ENCODE measurements at regions of chr12 and their contacts with region 1.

Region 1: GRCh38 chr12:55817346-55818139 is at the starts of genes ORMDL2 and SARNP:
- DNase-seq: peak; percentile 99
- H3K4me3 ChIP-seq: peak within 1 kb of the TSS; percentile 66 to 87
- H3K27ac ChIP-seq: peak within 1 kb of the TSS; percentile 86 to 89
- H3K4me1 ChIP-seq: peaks cover 0 to 17% of the 10 kb centered on the region in 2 donors
- H3K27me3 ChIP-seq: no peaks in the 10 kb centered on the region
- CTCF ChIP-seq: no peak
- total RNA-seq, gene ORMDL2: 13.8 TPM
- total RNA-seq, gene SARNP: 13.4 TPM

Region 2: GRCh38 chr12:55659486-55660385 is 157.8 kb before region 1 on chr12:
- intact Hi-C with region 1: loop called (anchors 10 kb)
- DNase-seq: no peak
- H3K4me3 ChIP-seq: no peak overlapping the region
- H3K27ac ChIP-seq: no peak overlapping the region
- H3K4me1 ChIP-seq: no peaks in the 10 kb centered on the region
- H3K27me3 ChIP-seq: no peaks in the 10 kb centered on the region
- CTCF ChIP-seq: peak in 2 of 3 experiments; percentile 53 to 63

Region 3: DNA sequence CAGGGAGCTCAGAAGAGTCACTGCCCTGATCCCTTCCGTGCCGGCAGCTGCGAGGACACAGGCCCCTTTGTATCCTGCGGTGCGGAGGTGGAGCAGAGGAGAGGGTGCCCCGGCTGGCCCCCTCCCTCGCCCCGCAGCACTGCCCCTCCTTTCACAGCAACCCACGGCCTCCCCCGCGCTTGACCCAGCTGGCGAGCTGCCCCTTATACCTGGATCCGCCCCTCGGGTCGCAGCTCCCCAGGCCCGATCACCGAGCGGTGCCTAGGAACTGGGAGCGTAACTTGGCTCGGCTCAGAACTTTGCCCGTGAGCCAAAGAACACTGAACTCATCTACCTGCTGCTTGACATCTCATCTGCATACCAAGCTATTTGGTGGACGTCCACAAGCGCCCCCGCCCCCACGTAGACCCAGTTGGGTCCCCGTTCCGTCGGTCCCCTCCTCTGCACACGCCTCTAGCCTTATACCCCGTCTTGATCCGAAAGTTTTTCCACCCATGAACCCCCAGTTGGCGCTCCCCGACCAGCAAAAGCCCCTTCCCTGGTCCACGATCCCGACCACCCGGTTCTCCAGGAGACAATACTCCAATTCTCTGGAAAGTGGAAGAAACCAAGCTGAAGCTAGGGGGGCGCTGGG is 12.5 kb after region 1 on chr12:
- intact Hi-C with region 1: loop called (anchors 1 kb)
- DNase-seq: peak in 1 of 2 donors; percentile 81
- H3K4me3 ChIP-seq: peak overlapping the region; percentile 75 to 99
- H3K27ac ChIP-seq: peak overlapping the region; percentile 92 to 99
- H3K4me1 ChIP-seq: peaks cover 8 to 32% of the 10 kb centered on the region in 2 donors
- H3K27me3 ChIP-seq: no peaks in the 10 kb centered on the region
- CTCF ChIP-seq: no peak

Region 4: DNA sequence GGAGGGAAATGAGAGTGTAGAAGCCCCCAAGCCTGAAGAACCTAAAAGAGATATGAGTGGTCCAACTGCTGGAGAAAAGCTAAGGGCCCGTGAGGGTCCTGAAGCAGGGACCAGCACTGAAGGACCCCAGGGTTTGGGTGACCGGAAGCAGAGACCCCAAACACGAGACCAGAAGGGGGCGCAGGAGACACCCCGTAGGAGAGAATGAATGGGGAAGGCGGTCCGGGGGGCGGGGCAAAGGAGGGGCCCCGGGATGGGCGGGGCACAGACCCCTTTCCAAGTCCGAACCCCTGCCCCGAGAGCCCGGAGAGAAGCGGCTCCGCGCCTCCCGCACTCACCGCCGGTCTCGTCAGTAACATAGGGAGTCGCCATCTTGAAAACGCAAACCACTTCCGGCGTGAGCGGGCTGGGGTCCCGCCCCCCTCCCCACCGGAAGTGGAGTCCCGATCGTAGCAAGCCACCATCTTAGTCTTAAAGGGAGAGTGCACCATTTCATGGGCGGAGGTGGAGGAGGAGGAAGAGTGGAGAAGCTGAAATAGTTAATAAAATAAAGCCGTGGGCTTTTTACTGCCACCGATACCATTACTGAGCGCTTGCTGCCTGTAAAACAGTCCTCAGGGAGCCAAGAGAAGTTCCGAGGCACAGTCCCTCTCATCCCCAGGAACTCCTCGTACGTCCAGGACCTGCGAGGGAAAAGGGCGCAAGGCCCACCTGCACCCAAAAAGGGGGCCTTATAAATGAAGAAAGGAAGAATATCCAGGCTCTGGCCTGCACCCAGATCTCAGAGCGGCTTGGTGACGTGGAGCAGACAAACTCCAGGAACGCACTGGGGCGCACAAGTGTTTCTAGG is 109.4 kb after region 1 on chr12:
- intact Hi-C with region 1: loop called (anchors 1 kb)
- DNase-seq: peak; percentile 78 to 96
- H3K4me3 ChIP-seq: peak overlapping the region; percentile 88 to 98
- H3K27ac ChIP-seq: peak overlapping the region; percentile 97 to 99
- H3K4me1 ChIP-seq: peaks cover 5 to 15% of the 10 kb centered on the region in 2 donors
- H3K27me3 ChIP-seq: no peaks in the 10 kb centered on the region
- CTCF ChIP-seq: peak; percentile 70 to 90 (median 80)

Region 5: DNA sequence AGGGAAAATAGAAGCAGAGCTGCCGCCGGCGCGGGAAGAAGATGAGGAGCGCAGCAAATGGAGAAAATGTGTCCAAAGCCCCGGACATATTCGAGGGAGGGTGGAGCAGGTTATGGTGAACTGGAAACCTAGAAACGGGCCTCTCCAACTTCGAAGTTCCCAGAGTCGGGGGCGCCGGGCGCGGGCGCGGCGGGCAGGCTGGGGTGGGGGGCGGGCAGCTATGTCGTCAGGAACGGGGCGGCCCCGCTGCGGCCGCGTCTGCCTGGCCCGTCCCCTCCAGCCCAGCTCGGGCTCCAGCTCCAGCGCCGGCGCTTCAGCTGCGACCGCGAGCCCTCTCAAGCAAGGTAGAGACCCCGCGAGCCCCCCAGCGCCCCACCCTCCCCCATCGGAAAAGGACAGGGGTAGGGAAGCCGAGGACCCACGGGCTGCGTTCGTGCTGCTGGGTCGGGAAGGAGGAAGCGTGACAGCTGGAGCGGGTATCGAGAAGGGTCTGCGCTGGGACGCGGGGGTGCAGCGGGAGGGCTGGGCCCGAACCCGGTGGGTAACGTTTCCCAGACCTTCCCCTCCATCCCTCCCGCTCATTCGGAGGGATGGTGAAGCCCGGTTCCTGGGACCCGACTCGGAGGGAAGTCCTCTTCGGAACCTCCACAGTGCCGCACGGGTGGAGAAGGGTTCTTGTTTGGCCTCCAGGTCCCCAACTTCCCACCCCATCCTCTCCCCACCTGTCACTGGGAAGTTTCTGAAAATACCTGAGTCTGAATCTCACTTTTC is 114.4 kb after region 1 on chr12:
- intact Hi-C with region 1: loop called (anchors 1 kb)
- DNase-seq: peak in 1 of 2 donors; percentile 84
- H3K4me3 ChIP-seq: peak overlapping the region; percentile 72 to 98
- H3K27ac ChIP-seq: peak overlapping the region; percentile 92 to 95
- H3K4me1 ChIP-seq: peaks cover 8 to 27% of the 10 kb centered on the region in 2 donors
- H3K27me3 ChIP-seq: no peaks in the 10 kb centered on the region
- CTCF ChIP-seq: no peak

Region 6: GRCh38 chr12:55940065-55940732 is 122.7 kb after region 1 on chr12:
- intact Hi-C with region 1: loop called (anchors 1 kb)
- DNase-seq: peak; percentile 36 to 93
- H3K4me3 ChIP-seq: peak overlapping the region in 1 of 2 donors; percentile 42
- H3K27ac ChIP-seq: peak overlapping the region; percentile 53 to 71
- H3K4me1 ChIP-seq: peaks cover 0 to 7% of the 10 kb centered on the region in 2 donors
- H3K27me3 ChIP-seq: no peaks in the 10 kb centered on the region
- CTCF ChIP-seq: peak; percentile 83 to 90 (median 87)

Measured in ascending aorta (tissue), 2 donors.